B cell (primary cell): ENCODE measurements at regions of chr2 and their contacts with region 1.

Region 1: DNA sequence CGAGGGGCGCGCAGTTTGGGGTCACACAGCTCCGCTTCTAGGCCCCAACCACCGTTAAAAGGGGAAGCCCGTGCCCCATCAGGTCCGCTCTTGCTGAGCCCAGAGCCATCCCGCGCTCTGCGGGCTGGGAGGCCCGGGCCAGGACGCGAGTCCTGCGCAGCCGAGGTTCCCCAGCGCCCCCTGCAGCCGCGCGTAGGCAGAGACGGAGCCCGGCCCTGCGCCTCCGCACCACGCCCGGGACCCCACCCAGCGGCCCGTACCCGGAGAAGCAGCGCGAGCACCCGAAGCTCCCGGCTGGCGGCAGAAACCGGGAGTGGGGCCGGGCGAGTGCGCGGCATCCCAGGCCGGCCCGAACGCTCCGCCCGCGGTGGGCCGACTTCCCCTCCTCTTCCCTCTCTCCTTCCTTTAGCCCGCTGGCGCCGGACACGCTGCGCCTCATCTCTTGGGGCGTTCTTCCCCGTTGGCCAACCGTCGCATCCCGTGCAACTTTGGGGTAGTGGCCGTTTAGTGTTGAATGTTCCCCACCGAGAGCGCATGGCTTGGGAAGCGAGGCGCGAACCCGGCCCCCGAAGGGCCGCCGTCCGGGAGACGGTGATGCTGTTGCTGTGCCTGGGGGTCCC is at the start of gene ITGA4:
- DNase-seq: no peak
- ATAC-seq: peak; percentile 79
- H3K4me3 ChIP-seq: peak within 1 kb of the TSS; percentile 90 to 97 (median 93)
- H3K4me3 Mint-ChIP-seq: peak within 1 kb of the TSS; percentile 90
- H3K27ac ChIP-seq: peak within 1 kb of the TSS; percentile 95 to 100
- H3K27ac Mint-ChIP-seq: peak within 1 kb of the TSS; percentile 99
- H3K4me1 ChIP-seq: peaks cover 33 to 38% of the 10 kb centered on the region in 2 donors
- H3K4me1 Mint-ChIP-seq: peaks cover 59% of the 10 kb centered on the region
- H3K27me3 ChIP-seq: no peaks in the 10 kb centered on the region
- H3K27me3 Mint-ChIP-seq: no peaks in the 10 kb centered on the region
- CTCF ChIP-seq: peak; percentile 81
- total RNA-seq, gene ITGA4: 169 and 174 TPM in 2 replicates

Region 2: DNA sequence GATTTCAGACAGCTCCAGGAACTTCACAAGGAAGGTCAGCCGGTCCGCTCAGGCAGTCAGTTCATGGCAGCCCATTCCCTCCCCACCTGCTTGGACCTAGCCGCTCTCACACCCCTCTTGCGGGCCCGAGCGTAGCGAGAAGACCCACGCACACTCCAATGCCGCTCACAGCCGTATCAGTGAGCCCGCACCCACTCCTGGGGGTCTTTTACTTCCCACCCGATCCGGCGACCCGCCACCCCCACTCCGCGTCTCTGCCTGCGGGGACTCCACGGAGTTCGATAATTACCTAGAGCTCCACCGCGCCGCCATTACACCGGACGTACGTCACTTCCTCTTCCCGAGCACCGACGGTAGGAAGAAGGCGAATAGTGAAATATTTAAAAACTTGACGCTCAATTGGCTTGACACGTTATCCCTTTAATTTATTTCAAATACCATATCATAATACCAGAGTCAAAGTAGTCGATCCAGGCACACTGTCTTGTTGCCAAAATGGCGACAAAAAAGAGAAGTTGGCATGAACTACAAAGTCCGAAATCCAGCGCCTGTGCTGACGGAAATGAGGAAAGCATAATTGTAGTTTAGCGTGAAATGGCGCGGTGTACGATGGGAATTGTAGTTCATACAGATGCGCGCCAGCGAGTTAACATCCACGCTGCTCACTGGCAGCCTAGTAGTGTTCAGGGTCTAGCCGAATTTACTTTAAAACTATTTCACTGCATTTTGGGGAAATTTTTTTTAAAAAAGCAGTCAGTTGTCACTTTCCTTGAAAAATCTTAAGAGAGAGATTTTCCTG is 1450.3 kb before region 1 on chr2 and contains the start of gene CWC22:
- CTCF ChIA-PET with region 1: no interaction called
- POLR2A ChIA-PET with region 1: no interaction called
- intact Hi-C with region 1: loop called (anchors 2 kb)
- DNase-seq: peak; percentile 96
- ATAC-seq: peak; percentile 95
- H3K4me3 ChIP-seq: peak within 1 kb of the TSS; percentile 89 to 98 (median 91)
- H3K4me3 Mint-ChIP-seq: peak within 1 kb of the TSS; percentile 94
- H3K27ac ChIP-seq: peak within 1 kb of the TSS; percentile 88 to 99
- H3K27ac Mint-ChIP-seq: peak within 1 kb of the TSS; percentile 99
- H3K4me1 ChIP-seq: peaks cover 12 to 18% of the 10 kb centered on the region in 2 donors
- H3K4me1 Mint-ChIP-seq: peaks cover 39% of the 10 kb centered on the region
- H3K27me3 ChIP-seq: no peaks in the 10 kb centered on the region
- H3K27me3 Mint-ChIP-seq: no peaks in the 10 kb centered on the region
- CTCF ChIP-seq: no peak
- total RNA-seq, gene CWC22: 28.6 and 28.7 TPM in 2 replicates

Region 3: GRCh38 chr2:181104512-181105115 is 352.6 kb before region 1 on chr2:
- CTCF ChIA-PET with region 1: interaction called, 67 read pairs
- POLR2A ChIA-PET with region 1: interaction called, 3 read pairs
- intact Hi-C with region 1: loop called (anchors 1 kb)
- DNase-seq: peak; percentile 65
- ATAC-seq: peak; percentile 41
- H3K4me3 ChIP-seq: no peak overlapping the region
- H3K4me3 Mint-ChIP-seq: no peak overlapping the region
- H3K27ac ChIP-seq: no peak overlapping the region
- H3K27ac Mint-ChIP-seq: no peak overlapping the region
- H3K4me1 ChIP-seq: no peaks in the 10 kb centered on the region
- H3K4me1 Mint-ChIP-seq: peaks cover 2% of the 10 kb centered on the region
- H3K27me3 ChIP-seq: no peaks in the 10 kb centered on the region
- H3K27me3 Mint-ChIP-seq: no peaks in the 10 kb centered on the region
- CTCF ChIP-seq: peak; percentile 81

Region 4: GRCh38 chr2:181393472-181393871 is 63.8 kb before region 1 on chr2:
- CTCF ChIA-PET with region 1: interaction called, 13 read pairs
- POLR2A ChIA-PET with region 1: no interaction called
- intact Hi-C with region 1: no loop called
- DNase-seq: peak; percentile 67
- ATAC-seq: peak; percentile 73
- H3K4me3 ChIP-seq: peak overlapping the region in 1 of 5 experiments; percentile 34
- H3K4me3 Mint-ChIP-seq: peak overlapping the region; percentile 74
- H3K27ac ChIP-seq: peak overlapping the region; percentile 47 to 88
- H3K27ac Mint-ChIP-seq: peak overlapping the region; percentile 78
- H3K4me1 ChIP-seq: peaks cover 24 to 30% of the 10 kb centered on the region in 2 donors
- H3K4me1 Mint-ChIP-seq: peaks cover 32% of the 10 kb centered on the region
- H3K27me3 ChIP-seq: no peaks in the 10 kb centered on the region
- H3K27me3 Mint-ChIP-seq: no peaks in the 10 kb centered on the region
- CTCF ChIP-seq: no peak

Region 5: GRCh38 chr2:181430406-181431118 is 26.7 kb before region 1 on chr2:
- CTCF ChIA-PET with region 1: interaction called, 26 read pairs
- POLR2A ChIA-PET with region 1: no interaction called
- intact Hi-C with region 1: loop called (anchors 1 kb)
- DNase-seq: peak; percentile 69
- ATAC-seq: peak; percentile 75
- H3K4me3 ChIP-seq: no peak overlapping the region
- H3K4me3 Mint-ChIP-seq: no peak overlapping the region
- H3K27ac ChIP-seq: peak overlapping the region; percentile 51 to 60
- H3K27ac Mint-ChIP-seq: peak overlapping the region; percentile 83
- H3K4me1 ChIP-seq: peaks cover 14% of the 10 kb centered on the region in 2 donors
- H3K4me1 Mint-ChIP-seq: peaks cover 18% of the 10 kb centered on the region
- H3K27me3 ChIP-seq: no peaks in the 10 kb centered on the region
- H3K27me3 Mint-ChIP-seq: no peaks in the 10 kb centered on the region
- CTCF ChIP-seq: peak; percentile 79

Region 6: GRCh38 chr2:181483876-181484275 is 26.6 kb after region 1 on chr2:
- CTCF ChIA-PET with region 1: no interaction called
- POLR2A ChIA-PET with region 1: no interaction called
- intact Hi-C with region 1: no loop called
- DNase-seq: no peak
- ATAC-seq: no peak
- H3K4me3 ChIP-seq: no peak overlapping the region
- H3K4me3 Mint-ChIP-seq: no peak overlapping the region
- H3K27ac ChIP-seq: no peak overlapping the region
- H3K27ac Mint-ChIP-seq: peak overlapping the region; percentile 10
- H3K4me1 ChIP-seq: no peaks in the 10 kb centered on the region
- H3K4me1 Mint-ChIP-seq: peaks cover 2% of the 10 kb centered on the region
- H3K27me3 ChIP-seq: no peaks in the 10 kb centered on the region
- H3K27me3 Mint-ChIP-seq: no peaks in the 10 kb centered on the region
- CTCF ChIP-seq: no peak

Region 7: DNA sequence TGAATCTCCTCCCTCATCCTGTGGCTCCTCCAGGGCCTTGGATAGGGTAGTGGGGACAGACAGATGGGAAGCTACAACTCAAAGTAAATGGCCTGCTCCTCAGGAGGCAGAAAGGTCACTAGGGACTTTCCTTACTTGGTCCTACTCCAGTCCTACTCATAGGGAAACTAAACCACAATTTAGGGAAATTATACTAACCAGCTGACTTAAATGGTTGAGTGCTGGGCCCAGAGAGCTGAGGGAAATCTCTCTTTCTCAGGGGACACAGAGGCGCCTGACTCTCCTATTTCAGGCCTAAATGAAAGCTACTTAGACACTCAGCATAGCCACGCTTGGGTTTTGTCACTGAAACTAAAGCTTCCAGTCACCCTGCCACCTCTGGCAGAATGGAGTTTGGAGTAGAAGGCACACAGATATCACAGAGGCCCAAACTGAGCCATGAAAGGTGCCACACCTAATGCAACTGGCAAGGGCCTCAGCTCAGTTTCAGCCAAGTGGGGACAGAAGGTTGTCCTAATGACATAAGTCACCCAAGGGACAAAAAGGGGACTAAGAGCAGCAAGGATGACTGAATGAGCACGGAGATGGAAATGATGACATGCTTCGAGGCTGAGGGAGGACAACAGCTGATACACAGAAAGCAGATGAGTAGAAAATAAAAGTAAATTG is 175.6 kb after region 1 on chr2:
- CTCF ChIA-PET with region 1: no interaction called
- POLR2A ChIA-PET with region 1: no interaction called
- intact Hi-C with region 1: no loop called
- DNase-seq: no peak
- ATAC-seq: no peak
- H3K4me3 ChIP-seq: no peak overlapping the region
- H3K4me3 Mint-ChIP-seq: no peak overlapping the region
- H3K27ac ChIP-seq: no peak overlapping the region
- H3K27ac Mint-ChIP-seq: no peak overlapping the region
- H3K4me1 ChIP-seq: no peaks in the 10 kb centered on the region
- H3K4me1 Mint-ChIP-seq: no peaks in the 10 kb centered on the region
- H3K27me3 ChIP-seq: no peaks in the 10 kb centered on the region
- H3K27me3 Mint-ChIP-seq: peaks cover 17% of the 10 kb centered on the region
- CTCF ChIP-seq: no peak

Region 8: GRCh38 chr2:182715896-182716668 is 1258.9 kb after region 1 on chr2 and contains the start of gene DNAJC10:
- CTCF ChIA-PET with region 1: no interaction called
- POLR2A ChIA-PET with region 1: no interaction called
- intact Hi-C with region 1: loop called (anchors 2 kb)
- DNase-seq: peak; percentile 96
- ATAC-seq: peak; percentile 82
- H3K4me3 ChIP-seq: peak within 1 kb of the TSS; percentile 58 to 91 (median 82)
- H3K4me3 Mint-ChIP-seq: no peak within 1 kb of the TSS
- H3K27ac ChIP-seq: peak within 1 kb of the TSS; percentile 95 to 96
- H3K27ac Mint-ChIP-seq: no peak within 1 kb of the TSS
- H3K4me1 ChIP-seq: peaks cover 37 to 46% of the 10 kb centered on the region in 2 donors
- H3K4me1 Mint-ChIP-seq: peaks cover 24% of the 10 kb centered on the region
- H3K27me3 ChIP-seq: no peaks in the 10 kb centered on the region
- H3K27me3 Mint-ChIP-seq: no peaks in the 10 kb centered on the region
- CTCF ChIP-seq: no peak
- total RNA-seq, gene DNAJC10: 115 and 117 TPM in 2 replicates